SK-N-SH (cell line): ENCODE measurements at regions of chr20 and their contacts with region 1.

Region 1: DNA sequence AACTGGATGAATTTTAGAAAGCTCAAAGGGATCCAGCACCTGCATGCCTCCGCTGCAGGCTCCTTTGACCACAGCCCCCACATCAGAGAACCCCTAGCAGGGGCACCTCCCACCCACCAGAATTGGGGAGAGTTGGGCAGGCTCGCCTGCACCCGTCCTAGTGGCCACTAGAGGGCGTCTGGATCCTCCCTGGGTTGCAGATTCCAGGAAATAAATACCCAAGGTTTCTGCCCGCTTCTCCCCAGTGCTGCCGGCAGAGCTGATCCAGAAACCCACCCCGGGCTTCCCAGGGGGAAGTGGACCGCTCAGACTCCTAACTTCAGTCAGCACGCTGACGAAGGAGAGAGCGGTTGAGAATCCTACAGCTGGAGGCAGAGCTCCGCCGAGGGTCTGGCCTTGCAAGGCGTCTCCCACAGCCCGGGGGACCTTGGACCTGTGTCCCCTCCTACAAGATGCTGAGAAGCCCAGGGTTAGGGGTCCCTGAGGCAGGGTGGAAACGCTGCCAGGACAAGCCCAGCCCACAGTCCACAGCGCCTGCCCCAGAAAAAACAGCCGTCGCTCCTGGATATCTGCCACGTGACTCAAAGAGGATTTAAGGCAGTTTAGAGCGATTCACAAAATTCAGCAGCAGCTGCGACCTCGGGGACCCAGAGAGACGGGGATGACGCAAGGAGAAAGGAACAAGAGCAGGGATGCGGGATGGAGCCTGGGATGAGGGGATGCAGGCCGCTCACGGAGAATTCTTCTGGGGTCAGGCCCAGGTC is 32.6 kb upstream of the PHACTR3 start:
- DNase-seq: peak; percentile 91
- H3K4me3 ChIP-seq: peak overlapping the region; percentile 41 to 58
- H3K27ac ChIP-seq: no peak overlapping the region
- H3K4me1 ChIP-seq: peaks cover 0 to 15% of the 10 kb centered on the region in 2 experiments; a peak in 1 of 4 replicates
- H3K27me3 ChIP-seq: no peaks in the 10 kb centered on the region
- CTCF ChIP-seq: peak; percentile 93
- EP300 ChIP-seq: no peak
- RAD21 ChIP-seq: peak; percentile 68

Region 2: DNA sequence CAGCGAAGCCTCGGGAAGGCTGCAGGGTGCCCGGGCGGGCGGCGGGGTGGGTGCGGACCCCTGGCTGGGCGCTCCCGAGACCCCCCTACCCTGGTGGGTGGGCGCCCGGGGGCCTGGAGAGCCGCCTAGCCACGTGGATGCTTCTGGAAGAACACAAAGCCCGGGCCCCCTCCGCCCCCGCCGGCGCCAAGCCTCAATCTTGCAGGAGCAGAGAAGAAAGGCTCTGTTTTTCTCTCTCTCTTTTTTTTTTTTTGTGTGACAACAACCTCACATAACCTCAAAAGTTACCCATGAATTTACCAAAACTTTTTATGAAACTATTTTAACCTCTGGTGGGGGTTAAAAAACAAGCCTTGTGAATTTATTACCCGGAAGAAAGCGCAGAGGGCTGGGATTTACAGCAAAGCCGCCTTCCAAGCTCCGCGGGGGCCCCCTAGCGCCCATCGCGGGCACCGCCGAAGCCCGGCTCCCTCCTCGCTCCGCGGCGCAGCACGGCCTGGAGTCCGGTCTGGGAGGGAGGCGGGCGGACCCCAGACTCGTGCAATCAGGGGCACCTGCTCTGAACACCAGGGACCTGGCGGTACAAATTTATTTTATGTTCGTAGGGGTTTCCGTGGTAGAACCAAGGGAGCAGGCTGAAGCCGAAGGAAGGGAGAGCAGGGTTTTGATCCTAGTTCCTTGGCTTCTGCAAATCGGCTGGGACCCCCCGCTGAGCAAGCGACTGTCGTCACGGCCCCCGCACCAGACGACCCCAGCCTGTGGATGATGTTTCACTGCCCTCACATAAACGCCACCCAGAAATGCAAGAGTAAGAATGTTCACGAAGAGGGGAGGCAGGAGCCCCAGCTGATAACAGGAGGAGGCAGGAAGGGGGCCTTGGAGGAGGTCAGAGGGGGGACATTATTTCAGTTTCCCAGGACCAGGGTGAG is 349.2 kb before region 1 on chr20:
- CTCF ChIA-PET with region 1: no interaction called
- POLR2A ChIA-PET with region 1: no interaction called
- DNase-seq: peak; percentile 92
- H3K4me3 ChIP-seq: peak overlapping the region; percentile 47 to 55
- H3K27ac ChIP-seq: peak overlapping the region in 1 of 2 experiments; percentile 64; a peak in 1 of 4 replicates
- H3K4me1 ChIP-seq: peaks cover 0 to 23% of the 10 kb centered on the region in 2 experiments; a peak in 2 of 4 replicates
- H3K27me3 ChIP-seq: peaks cover 7% of the 10 kb centered on the region; the same call in 1 of the 2 replicates
- CTCF ChIP-seq: peak; percentile 97
- EP300 ChIP-seq: 0 out of 4 replicates have a peak, but pooled peaks of 1 of the 2 experiments have one; percentile 7
- RAD21 ChIP-seq: peak; percentile 90

Region 3: DNA sequence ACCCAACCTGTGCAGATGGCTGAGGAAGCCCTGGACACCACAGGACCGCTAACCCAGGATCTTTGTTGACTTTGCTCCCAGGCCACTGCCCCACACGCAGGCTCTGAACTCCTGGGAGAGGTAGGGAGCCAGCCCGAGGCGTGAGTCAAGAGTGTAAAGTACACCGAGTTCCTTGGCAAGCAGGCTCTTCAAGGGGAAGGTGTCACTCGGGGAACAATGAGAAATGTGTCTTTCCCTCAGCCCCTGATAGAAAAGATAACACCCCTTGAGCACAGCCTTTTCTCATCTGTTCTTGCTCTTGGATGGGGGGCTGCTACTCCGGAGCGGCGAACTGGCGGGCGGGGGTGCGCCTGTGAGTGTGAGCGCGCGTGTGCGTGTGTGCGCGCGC is 271.8 kb before region 1 on chr20:
- CTCF ChIA-PET with region 1: no interaction called
- POLR2A ChIA-PET with region 1: no interaction called
- DNase-seq: no peak
- H3K4me3 ChIP-seq: no peak overlapping the region; a peak in 1 of 4 replicates
- H3K27ac ChIP-seq: no peak overlapping the region
- H3K4me1 ChIP-seq: peaks cover 0 to 4% of the 10 kb centered on the region in 2 experiments; a peak in 1 of 4 replicates
- H3K27me3 ChIP-seq: peaks cover 8% of the 10 kb centered on the region; the same call in 1 of the 2 replicates
- CTCF ChIP-seq: no peak
- EP300 ChIP-seq: no peak
- RAD21 ChIP-seq: no peak

Region 4: DNA sequence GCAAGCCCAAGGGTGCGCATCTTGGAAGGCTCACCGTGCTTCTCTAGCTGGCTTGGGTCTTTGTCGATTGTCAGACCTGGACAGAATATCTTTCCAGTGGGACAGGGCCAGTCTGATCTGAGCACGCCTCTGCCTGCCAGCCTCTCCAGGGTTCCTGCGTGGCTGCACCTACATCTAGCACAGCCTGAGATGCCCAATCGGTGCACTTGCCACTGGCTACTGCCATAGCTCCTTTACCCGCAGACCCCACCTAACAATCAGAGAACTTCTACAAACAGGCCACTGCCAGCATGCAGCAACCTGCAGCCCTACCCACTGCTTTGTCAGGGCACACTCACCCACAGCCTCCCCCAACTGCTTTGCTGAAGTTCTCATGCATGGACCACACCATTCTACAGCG is 24.1 kb before region 1 on chr20:
- CTCF ChIA-PET with region 1: interaction called, 26 read pairs
- POLR2A ChIA-PET with region 1: no interaction called
- DNase-seq: no peak
- H3K4me3 ChIP-seq: no peak overlapping the region
- H3K27ac ChIP-seq: no peak overlapping the region
- H3K4me1 ChIP-seq: no peaks in the 10 kb centered on the region
- H3K27me3 ChIP-seq: no peaks in the 10 kb centered on the region
- CTCF ChIP-seq: no peak
- EP300 ChIP-seq: no peak
- RAD21 ChIP-seq: no peak

Region 5: DNA sequence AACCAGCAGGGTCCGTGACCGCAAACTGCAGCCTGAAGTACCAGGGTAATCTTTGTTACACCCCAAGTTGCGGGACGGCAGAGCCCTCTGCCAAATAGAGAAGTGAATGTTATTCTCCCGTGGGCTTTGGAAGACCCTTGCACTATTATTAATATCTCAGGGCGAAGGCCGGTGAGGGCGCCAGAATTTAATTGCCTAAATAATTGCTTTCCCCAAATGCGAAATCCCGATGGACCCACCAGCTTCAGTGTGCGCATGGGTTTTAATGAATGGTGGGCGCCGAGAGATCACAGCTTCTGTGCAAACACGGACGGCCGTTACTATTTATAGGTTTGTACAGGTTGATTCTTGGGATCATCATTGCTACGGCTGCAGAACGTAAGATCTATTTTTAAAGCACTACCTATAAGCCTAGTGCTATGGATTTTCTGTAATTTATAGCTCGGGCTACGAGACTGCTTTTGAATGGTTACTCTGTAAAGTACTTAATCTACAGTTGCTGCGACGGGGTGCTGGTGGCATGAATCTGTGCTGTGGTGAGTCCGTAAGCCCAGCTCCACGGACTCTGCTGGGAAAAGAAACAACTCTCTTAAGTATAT is 17.5 kb after region 1 on chr20:
- CTCF ChIA-PET with region 1: interaction called, 10 read pairs
- POLR2A ChIA-PET with region 1: no interaction called
- DNase-seq: no peak
- H3K4me3 ChIP-seq: no peak overlapping the region
- H3K27ac ChIP-seq: no peak overlapping the region
- H3K4me1 ChIP-seq: no peaks in the 10 kb centered on the region; a peak in 1 of 4 replicates
- H3K27me3 ChIP-seq: no peaks in the 10 kb centered on the region
- CTCF ChIP-seq: no peak
- EP300 ChIP-seq: no peak
- RAD21 ChIP-seq: no peak

Region 6: DNA sequence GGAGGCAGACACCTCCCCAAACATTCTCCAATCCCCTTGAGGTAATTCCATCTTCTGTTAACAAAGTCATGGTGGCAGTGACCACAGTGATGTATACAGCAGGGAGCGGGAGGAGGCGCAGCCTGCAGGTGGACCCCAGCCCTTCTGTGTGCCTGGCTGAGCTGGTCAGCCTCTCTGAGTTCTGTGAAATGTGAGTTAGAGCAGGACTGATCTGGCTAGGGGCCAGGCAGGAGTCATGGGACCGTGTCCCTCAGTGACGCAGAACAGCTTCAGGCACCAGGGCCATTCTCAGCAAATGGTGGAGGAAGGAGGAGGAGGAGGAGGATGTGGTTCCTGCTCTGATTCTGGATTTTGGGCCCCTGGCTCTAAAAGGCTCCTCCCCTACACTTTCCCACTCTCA is 39.5 kb after region 1 on chr20:
- CTCF ChIA-PET with region 1: interaction called, 17 read pairs
- POLR2A ChIA-PET with region 1: no interaction called
- DNase-seq: peak; percentile 54
- H3K4me3 ChIP-seq: no peak overlapping the region
- H3K27ac ChIP-seq: no peak overlapping the region
- H3K4me1 ChIP-seq: peaks cover 0 to 8% of the 10 kb centered on the region in 2 experiments; a peak in 1 of 4 replicates
- H3K27me3 ChIP-seq: peaks cover 5% of the 10 kb centered on the region
- CTCF ChIP-seq: no peak
- EP300 ChIP-seq: no peak
- RAD21 ChIP-seq: no peak

Region 7: GRCh38 chr20:59651865-59652264 is 80.1 kb after region 1 on chr20:
- CTCF ChIA-PET with region 1: no interaction called
- POLR2A ChIA-PET with region 1: no interaction called
- DNase-seq: no peak
- H3K4me3 ChIP-seq: no peak overlapping the region
- H3K27ac ChIP-seq: no peak overlapping the region
- H3K4me1 ChIP-seq: no peaks in the 10 kb centered on the region
- H3K27me3 ChIP-seq: no peaks in the 10 kb centered on the region
- CTCF ChIP-seq: no peak
- EP300 ChIP-seq: no peak
- RAD21 ChIP-seq: no peak

Region 8: DNA sequence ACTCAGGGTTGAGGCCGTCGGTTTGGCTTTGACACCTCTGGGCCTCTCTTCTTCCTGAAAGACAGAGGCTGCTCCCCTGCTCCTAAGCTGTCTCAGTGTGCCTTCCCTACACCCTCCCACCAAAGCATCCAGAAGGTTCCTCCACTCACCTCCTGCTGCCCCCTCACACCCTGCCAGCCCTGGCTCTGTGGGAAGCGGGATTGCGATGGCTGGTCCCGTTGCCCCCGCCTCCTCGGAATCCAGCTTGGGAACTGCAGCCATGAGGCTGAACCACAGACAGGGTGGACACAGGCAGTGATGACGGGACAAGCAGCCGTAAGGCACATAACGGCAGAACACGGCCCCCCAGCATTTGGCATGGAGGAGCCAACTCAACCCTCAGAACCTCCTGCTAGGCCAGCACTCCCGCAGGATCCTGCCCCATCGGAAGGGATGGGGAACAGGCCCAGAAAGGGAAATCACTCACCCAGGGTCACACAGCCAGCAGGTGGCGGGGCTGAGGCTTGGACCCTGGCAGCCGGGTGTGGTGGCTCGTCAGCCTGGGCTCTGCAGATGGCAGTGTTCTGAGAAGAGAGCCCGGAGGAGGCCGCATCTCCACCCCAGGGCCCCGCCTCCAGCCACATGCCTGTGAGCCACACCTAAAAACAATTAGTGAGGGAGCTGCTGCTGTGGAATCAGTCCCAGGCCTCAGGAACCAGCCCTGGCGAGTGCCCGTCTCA is 172.2 kb after region 1 on chr20:
- CTCF ChIA-PET with region 1: interaction called, 62 read pairs
- POLR2A ChIA-PET with region 1: no interaction called
- DNase-seq: no peak
- H3K4me3 ChIP-seq: no peak overlapping the region
- H3K27ac ChIP-seq: no peak overlapping the region
- H3K4me1 ChIP-seq: no peaks in the 10 kb centered on the region
- H3K27me3 ChIP-seq: no peaks in the 10 kb centered on the region
- CTCF ChIP-seq: no peak
- EP300 ChIP-seq: no peak
- RAD21 ChIP-seq: no peak

Region 9: DNA sequence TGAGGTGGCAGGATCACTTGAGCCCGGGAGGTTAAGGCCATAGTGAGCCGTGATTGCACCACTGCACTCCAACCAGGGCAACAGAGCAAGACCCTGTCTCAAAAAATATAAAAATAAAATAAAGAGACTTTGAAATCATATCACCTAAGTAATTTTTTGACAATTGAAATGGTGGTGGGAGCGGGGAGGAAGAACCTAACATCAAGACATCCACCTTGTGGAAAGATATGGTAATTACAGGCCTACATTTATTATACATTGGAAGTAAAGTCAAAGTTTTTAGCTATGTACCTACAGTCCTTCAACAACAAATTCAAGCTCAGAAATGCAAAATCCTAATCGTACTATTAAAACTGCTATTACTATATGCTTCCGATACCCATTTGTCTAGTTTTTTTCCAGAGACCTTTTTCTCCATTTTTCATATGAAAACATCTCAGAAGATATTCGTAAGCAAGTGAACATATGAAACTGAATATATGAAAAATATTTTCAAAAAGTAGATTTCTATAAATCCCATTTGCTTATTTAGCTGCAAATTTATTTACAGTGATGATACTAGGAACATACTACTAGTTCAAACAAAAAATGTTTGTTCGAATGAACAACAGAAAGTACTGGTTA is 278.4 kb after region 1 on chr20:
- CTCF ChIA-PET with region 1: interaction called, 13 read pairs
- POLR2A ChIA-PET with region 1: no interaction called
- DNase-seq: no peak
- H3K4me3 ChIP-seq: no peak overlapping the region
- H3K27ac ChIP-seq: no peak overlapping the region
- H3K4me1 ChIP-seq: no peaks in the 10 kb centered on the region
- H3K27me3 ChIP-seq: no peaks in the 10 kb centered on the region
- CTCF ChIP-seq: peak; percentile 69
- EP300 ChIP-seq: no peak
- RAD21 ChIP-seq: peak; percentile 78